A673 (cell line): ENCODE measurements at regions of chr1 and their contacts with region 1.

Region 1: GRCh38 chr1:94805912-94806311 is 14.2 kb upstream of the SLC44A3 start:
- DNase-seq: peak; percentile 70
- H3K4me3 ChIP-seq: no peak overlapping the region
- H3K27ac ChIP-seq: no peak overlapping the region
- H3K4me1 ChIP-seq: peaks cover 14% of the 10 kb centered on the region
- H3K27me3 ChIP-seq: no peaks in the 10 kb centered on the region
- CTCF ChIP-seq: peak; percentile 93

Region 2: DNA sequence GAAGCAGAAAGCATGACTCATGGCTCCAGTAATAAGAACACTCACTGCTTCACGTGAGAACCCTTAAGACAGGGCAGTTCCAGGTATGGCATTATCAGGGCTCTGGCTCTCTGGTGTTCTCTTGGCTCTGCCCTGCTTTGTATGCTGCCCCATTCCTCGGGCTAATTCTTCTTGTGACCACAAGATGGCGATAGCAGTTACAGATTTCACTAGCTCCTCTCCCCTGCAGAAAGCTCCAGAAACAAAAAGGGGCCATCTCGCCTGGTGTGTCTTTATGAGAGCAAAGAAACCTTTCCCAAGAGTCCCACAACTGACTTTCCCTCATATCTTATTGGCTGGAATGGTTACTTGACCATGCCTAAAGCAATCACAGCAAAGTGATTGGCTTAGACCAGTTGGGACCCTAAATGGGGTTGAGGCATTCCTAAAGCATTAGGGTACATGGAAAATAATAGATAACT is 324.4 kb before region 1 on chr1:
- CTCF ChIA-PET with region 1: interaction called, 12 read pairs
- POLR2A ChIA-PET with region 1: no interaction called
- intact Hi-C with region 1: loop called (anchors 1 kb)
- DNase-seq: peak; percentile 83
- H3K4me3 ChIP-seq: no peak overlapping the region
- H3K27ac ChIP-seq: no peak overlapping the region
- H3K4me1 ChIP-seq: no peaks in the 10 kb centered on the region
- H3K27me3 ChIP-seq: no peaks in the 10 kb centered on the region
- CTCF ChIP-seq: peak; percentile 86

Region 3: DNA sequence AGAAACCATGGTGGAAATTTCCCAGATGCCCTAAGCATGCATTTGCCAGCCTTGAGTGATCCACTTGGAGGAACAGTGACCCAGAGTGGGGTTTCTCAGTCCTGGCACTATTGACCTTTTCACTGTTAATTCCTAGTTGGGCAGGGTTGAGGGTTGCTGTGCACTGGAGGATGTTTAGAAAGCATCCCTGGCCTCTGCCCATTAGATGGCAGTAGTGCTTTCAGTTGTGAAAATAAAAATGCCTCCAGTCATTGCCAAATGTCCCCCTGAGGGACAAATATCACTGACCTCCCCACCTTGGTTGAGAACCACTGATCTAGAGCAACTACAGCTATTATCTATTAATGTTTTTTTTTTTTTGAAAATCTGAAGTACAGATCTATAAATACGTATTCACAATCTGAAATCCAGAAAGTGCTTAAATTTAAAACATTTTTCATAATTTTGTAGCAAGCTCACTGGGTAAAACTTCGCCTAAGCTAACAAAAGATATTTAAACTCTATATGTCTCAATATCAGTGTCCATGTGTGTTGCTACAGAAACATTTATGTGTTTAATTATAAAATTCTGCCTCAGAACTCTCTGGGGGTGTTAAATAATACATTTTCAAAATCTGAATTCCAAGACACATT is 291.7 kb before region 1 on chr1:
- CTCF ChIA-PET with region 1: interaction called, 5 read pairs
- POLR2A ChIA-PET with region 1: no interaction called
- intact Hi-C with region 1: loop called (anchors 2 kb)
- DNase-seq: peak; percentile 48
- H3K4me3 ChIP-seq: no peak overlapping the region
- H3K27ac ChIP-seq: no peak overlapping the region
- H3K4me1 ChIP-seq: no peaks in the 10 kb centered on the region
- H3K27me3 ChIP-seq: no peaks in the 10 kb centered on the region
- CTCF ChIP-seq: peak; percentile 77

Region 4: DNA sequence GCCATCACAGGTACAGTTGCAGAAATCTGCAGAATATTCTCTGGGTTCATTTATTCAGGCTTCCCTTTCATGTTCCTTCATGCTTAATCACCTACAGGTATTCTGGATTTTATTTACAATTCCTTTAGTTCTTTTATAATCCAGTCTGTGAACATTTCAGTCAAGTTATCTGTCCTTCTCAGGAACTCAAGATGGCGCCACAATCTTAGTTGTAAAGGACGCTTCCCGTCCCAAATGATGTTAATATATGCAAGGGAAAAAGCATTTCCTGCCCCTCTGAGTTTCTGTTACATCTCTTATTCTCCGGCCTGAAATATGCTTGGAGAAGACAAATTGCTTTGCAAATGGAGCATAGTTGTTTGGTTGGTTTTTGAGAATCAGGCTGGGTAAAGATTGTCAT is 283.6 kb before region 1 on chr1:
- CTCF ChIA-PET with region 1: interaction called, 5 read pairs
- POLR2A ChIA-PET with region 1: no interaction called
- intact Hi-C with region 1: loop called (anchors 1 kb)
- DNase-seq: peak; percentile 82
- H3K4me3 ChIP-seq: no peak overlapping the region
- H3K27ac ChIP-seq: no peak overlapping the region
- H3K4me1 ChIP-seq: no peaks in the 10 kb centered on the region
- H3K27me3 ChIP-seq: no peaks in the 10 kb centered on the region
- CTCF ChIP-seq: peak; percentile 78

Region 5: GRCh38 chr1:94622757-94623156 is 183.2 kb before region 1 on chr1:
- CTCF ChIA-PET with region 1: no interaction called
- POLR2A ChIA-PET with region 1: no interaction called
- intact Hi-C with region 1: no loop called
- DNase-seq: no peak
- H3K4me3 ChIP-seq: no peak overlapping the region
- H3K27ac ChIP-seq: no peak overlapping the region
- H3K4me1 ChIP-seq: no peaks in the 10 kb centered on the region
- H3K27me3 ChIP-seq: no peaks in the 10 kb centered on the region
- CTCF ChIP-seq: no peak